SK-N-SH (cell line): ENCODE measurements at regions of chr10 and their contacts with region 1.

Region 1: GRCh38 chr10:88932539-88933256 is 19.9 kb downstream of the ACTA2 start:
- DNase-seq: peak; percentile 44
- H3K4me3 ChIP-seq: no peak overlapping the region; a peak in 1 of 4 replicates
- H3K27ac ChIP-seq: 0 out of 4 replicates have a peak overlapping the region, but pooled peaks of 1 of the 2 experiments have one; percentile 20
- H3K4me1 ChIP-seq: peaks cover 7 to 11% of the 10 kb centered on the region in 2 experiments; a peak in 3 of 4 replicates
- H3K27me3 ChIP-seq: no peaks in the 10 kb centered on the region
- CTCF ChIP-seq: peak; percentile 90
- EP300 ChIP-seq: 0 out of 4 replicates have a peak, but pooled peaks of 1 of the 2 experiments have one; percentile 34
- RAD21 ChIP-seq: peak; percentile 94

Region 2: DNA sequence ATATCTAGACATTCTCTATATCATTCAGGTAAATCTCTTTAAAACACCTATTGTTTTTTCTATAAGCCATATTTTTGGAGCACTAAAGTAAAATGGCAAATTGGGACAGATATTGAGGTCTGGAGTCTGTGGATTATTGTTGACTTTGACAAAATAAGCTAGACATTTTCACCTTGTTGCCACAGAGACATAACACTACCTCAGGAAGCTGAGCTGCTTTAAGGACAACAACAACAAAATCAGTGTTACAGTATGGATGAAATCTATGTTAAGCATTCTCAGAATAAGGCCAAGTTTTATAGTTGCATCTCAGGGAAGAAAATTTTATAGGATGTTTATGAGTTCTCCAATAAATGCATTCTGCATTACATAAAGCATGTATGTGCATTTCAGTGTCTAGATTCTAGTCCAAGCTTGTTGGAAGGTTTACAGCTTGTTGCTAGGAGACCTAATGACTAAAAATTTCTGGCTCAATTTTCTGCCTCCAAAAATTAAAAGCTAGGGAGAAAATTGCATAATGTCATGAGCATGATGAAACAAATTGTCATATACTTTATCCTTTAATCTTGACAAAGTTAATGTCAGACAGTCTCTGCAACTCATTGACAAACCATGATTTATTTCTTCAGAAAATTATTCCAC is 111.8 kb before region 1 on chr10:
- CTCF ChIA-PET with region 1: interaction called, 41 read pairs
- POLR2A ChIA-PET with region 1: no interaction called
- DNase-seq: no peak
- H3K4me3 ChIP-seq: no peak overlapping the region
- H3K27ac ChIP-seq: peak overlapping the region in 1 of 2 experiments; percentile 30; a peak in 1 of 4 replicates
- H3K4me1 ChIP-seq: peaks cover 0 to 7% of the 10 kb centered on the region in 2 experiments; a peak in 1 of 4 replicates
- H3K27me3 ChIP-seq: no peaks in the 10 kb centered on the region
- CTCF ChIP-seq: no peak
- EP300 ChIP-seq: no peak
- RAD21 ChIP-seq: no peak

Region 3: GRCh38 chr10:88843171-88843570 is 89.5 kb before region 1 on chr10:
- CTCF ChIA-PET with region 1: interaction called, 425 read pairs
- POLR2A ChIA-PET with region 1: no interaction called
- DNase-seq: no peak
- H3K4me3 ChIP-seq: no peak overlapping the region
- H3K27ac ChIP-seq: no peak overlapping the region
- H3K4me1 ChIP-seq: no peaks in the 10 kb centered on the region
- H3K27me3 ChIP-seq: no peaks in the 10 kb centered on the region
- CTCF ChIP-seq: no peak
- EP300 ChIP-seq: no peak
- RAD21 ChIP-seq: no peak

Region 4: GRCh38 chr10:88880282-88881076 is 52.2 kb before region 1 on chr10:
- CTCF ChIA-PET with region 1: interaction called, 32 read pairs
- POLR2A ChIA-PET with region 1: interaction called, 7 read pairs
- DNase-seq: peak; percentile 87
- H3K4me3 ChIP-seq: peak overlapping the region; percentile 79 to 89
- H3K27ac ChIP-seq: peak overlapping the region; percentile 91 to 96
- H3K4me1 ChIP-seq: peaks cover 20 to 30% of the 10 kb centered on the region in 2 experiments; a peak in 3 of 4 replicates
- H3K27me3 ChIP-seq: no peaks in the 10 kb centered on the region
- CTCF ChIP-seq: peak; percentile 38; the same call in 1 of the 2 replicates
- EP300 ChIP-seq: peak in 1 of 2 experiments; percentile 37; a peak in 1 of 4 replicates
- RAD21 ChIP-seq: no peak

Region 5: GRCh38 chr10:88990384-88991160 is 57.9 kb after region 1 on chr10 and contains the start of gene FAS:
- CTCF ChIA-PET with region 1: interaction called, 314 read pairs
- POLR2A ChIA-PET with region 1: no interaction called
- DNase-seq: peak; percentile 65
- H3K4me3 ChIP-seq: peak within 1 kb of the TSS; percentile 77 to 89
- H3K27ac ChIP-seq: peak within 1 kb of the TSS; percentile 60 to 81
- H3K4me1 ChIP-seq: peaks cover 8 to 28% of the 10 kb centered on the region in 2 experiments; a peak in 3 of 4 replicates
- H3K27me3 ChIP-seq: no peaks in the 10 kb centered on the region
- CTCF ChIP-seq: no peak
- EP300 ChIP-seq: no peak
- RAD21 ChIP-seq: no peak
- polyA plus RNA-seq, gene FAS: 31.5 and 44.2 TPM in 2 replicates

Region 6: GRCh38 chr10:89207181-89207800 is 274.6 kb after region 1 on chr10 and contains the start of gene CH25H:
- CTCF ChIA-PET with region 1: interaction called, 27 read pairs
- POLR2A ChIA-PET with region 1: no interaction called
- DNase-seq: peak; percentile 72
- H3K4me3 ChIP-seq: peak within 1 kb of the TSS; percentile 49 to 67
- H3K27ac ChIP-seq: no peak within 1 kb of the TSS
- H3K4me1 ChIP-seq: peaks cover 7 to 19% of the 10 kb centered on the region in 2 experiments; a peak in 3 of 4 replicates
- H3K27me3 ChIP-seq: peaks cover 22% of the 10 kb centered on the region; the same call in 1 of the 2 replicates
- CTCF ChIP-seq: no peak
- EP300 ChIP-seq: no peak
- RAD21 ChIP-seq: no peak
- polyA plus RNA-seq, gene CH25H: not detected in 2 replicates